Activated B cell treated with CpG ODN at 0.5 μM for 24 hours (primary cell): ENCODE measurements at regions of chr5 and their contacts with region 1.

Region 1: DNA sequence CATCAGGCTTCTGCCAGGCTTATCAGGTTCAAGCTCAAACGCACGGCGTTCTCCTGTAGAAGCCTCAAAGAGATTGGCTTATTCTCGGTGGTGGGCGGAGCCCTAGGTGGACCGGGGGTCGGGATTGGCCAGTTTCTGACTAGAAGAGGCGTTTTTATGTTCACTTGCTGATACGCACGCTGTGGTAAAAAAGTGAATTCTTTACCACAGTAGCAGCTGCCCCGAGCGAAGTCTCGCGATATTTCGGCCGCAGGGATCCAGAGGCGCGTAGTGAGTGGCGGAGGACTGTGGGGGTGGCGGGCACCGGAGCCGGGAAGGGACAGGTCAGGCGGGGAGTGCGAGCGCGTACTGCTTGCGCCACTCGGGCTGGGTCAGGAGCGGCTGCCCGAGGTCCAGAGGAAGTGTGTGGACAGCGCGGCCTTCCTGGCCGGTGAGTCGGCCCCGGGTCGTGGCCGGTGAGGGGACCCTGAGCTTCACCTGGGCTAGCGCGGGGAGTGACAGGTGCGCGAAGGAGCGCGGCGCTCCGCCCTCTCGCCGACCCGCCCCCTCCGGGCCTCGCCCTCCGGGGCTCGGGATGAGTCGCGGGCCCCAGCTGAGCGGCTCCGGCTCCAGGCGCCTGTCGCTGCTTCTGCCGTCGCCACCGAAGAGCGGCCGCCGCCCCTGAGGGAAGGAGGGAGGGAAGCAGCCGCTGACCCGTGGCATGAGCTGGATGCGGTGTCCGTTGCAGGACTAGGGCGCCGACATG is at the start of gene DMXL1:
- DNase-seq: peak; percentile 95
- ATAC-seq: peak; percentile 82
- H3K4me3 Mint-ChIP-seq: peak within 1 kb of the TSS; percentile 99
- H3K27ac Mint-ChIP-seq: peak within 1 kb of the TSS; percentile 98
- H3K4me1 Mint-ChIP-seq: peaks cover 48% of the 10 kb centered on the region
- H3K27me3 Mint-ChIP-seq: peaks cover 2% of the 10 kb centered on the region
- CTCF ChIP-seq: no peak
- total RNA-seq, gene DMXL1: 66.8 and 76.9 TPM in 2 replicates

Region 2: GRCh38 chr5:119022017-119022745 is 48.8 kb before region 1 on chr5:
- CTCF ChIA-PET with region 1: interaction called, 13 read pairs
- POLR2A ChIA-PET with region 1: interaction called, 10 read pairs
- intact Hi-C with region 1: loop called (anchors 1 kb)
- DNase-seq: no peak
- ATAC-seq: peak; percentile 62
- H3K4me3 Mint-ChIP-seq: peak overlapping the region; percentile 45
- H3K27ac Mint-ChIP-seq: peak overlapping the region; percentile 87
- H3K4me1 Mint-ChIP-seq: peaks cover 72% of the 10 kb centered on the region
- H3K27me3 Mint-ChIP-seq: no peaks in the 10 kb centered on the region
- CTCF ChIP-seq: no peak

Region 3: DNA sequence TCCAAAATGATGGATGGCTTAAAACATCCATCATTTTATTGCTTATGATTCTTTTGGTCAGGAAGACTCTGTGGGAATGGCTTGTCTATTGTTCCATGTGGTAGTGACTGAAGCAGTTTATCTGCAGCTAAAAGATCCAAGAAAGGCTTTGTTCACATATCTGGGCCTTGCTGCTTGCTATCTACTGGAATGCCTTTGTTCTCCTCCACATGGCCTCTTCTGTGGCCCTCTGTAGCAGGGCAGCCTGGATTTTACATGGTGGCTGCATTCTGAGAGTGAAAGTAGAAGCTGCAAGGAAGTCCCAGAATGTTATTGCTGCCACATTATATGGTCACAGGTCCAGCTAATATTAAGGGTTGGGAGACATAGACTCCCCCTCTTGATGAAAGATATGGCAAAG is 35.0 kb after region 1 on chr5:
- CTCF ChIA-PET with region 1: no interaction called
- POLR2A ChIA-PET with region 1: no interaction called
- intact Hi-C with region 1: loop called (anchors 5 kb)
- DNase-seq: no peak
- ATAC-seq: no peak
- H3K4me3 Mint-ChIP-seq: no peak overlapping the region
- H3K27ac Mint-ChIP-seq: no peak overlapping the region
- H3K4me1 Mint-ChIP-seq: peaks cover 4% of the 10 kb centered on the region
- H3K27me3 Mint-ChIP-seq: no peaks in the 10 kb centered on the region
- CTCF ChIP-seq: no peak

Region 4: DNA sequence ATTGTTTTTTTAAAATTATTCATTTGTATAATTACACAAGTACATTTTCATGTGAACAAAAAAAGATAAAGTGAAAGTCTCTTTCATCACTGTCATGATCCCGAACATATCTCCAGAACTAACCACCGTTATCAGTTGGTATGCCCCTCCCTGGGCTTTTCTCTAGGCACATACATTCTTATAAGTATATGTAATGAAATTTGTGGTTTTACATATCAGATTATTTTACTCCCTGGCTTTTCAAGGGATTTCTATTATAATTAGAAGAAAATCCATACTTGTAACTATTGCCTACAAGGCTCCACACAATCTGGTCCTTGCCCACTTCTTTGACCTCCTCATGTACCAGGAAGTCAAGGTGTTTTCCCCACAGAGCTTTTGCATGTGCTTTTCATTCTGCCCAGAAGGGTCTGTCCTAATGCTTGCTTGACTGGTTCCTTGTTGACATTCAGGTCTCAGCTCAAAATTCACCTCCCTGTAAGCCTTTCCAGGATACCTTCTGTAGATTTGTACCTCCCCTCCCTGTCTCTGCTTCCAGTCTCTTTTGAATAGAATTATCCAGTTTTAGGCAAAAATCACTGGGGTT is 347.6 kb after region 1 on chr5:
- CTCF ChIA-PET with region 1: no interaction called
- POLR2A ChIA-PET with region 1: interaction called, 6 read pairs
- intact Hi-C with region 1: loop called (anchors 2 kb)
- DNase-seq: no peak
- ATAC-seq: peak; percentile 66
- H3K4me3 Mint-ChIP-seq: peak overlapping the region; percentile 63
- H3K27ac Mint-ChIP-seq: peak overlapping the region; percentile 89
- H3K4me1 Mint-ChIP-seq: peaks cover 81% of the 10 kb centered on the region
- H3K27me3 Mint-ChIP-seq: no peaks in the 10 kb centered on the region
- CTCF ChIP-seq: no peak

Region 5: GRCh38 chr5:120457839-120458507 is 1387.0 kb after region 1 on chr5:
- CTCF ChIA-PET with region 1: interaction called, 3 read pairs
- POLR2A ChIA-PET with region 1: no interaction called
- intact Hi-C with region 1: loop called (anchors 5 kb)
- DNase-seq: peak; percentile 61
- ATAC-seq: peak; percentile 85
- H3K4me3 Mint-ChIP-seq: peak overlapping the region; percentile 85
- H3K27ac Mint-ChIP-seq: peak overlapping the region; percentile 84
- H3K4me1 Mint-ChIP-seq: peaks cover 13% of the 10 kb centered on the region
- H3K27me3 Mint-ChIP-seq: peaks cover 5% of the 10 kb centered on the region
- CTCF ChIP-seq: no peak